Posterior vena cava (tissue), 2 donors: ENCODE measurements at regions of chr20 and their contacts with region 1.

Region 1: DNA sequence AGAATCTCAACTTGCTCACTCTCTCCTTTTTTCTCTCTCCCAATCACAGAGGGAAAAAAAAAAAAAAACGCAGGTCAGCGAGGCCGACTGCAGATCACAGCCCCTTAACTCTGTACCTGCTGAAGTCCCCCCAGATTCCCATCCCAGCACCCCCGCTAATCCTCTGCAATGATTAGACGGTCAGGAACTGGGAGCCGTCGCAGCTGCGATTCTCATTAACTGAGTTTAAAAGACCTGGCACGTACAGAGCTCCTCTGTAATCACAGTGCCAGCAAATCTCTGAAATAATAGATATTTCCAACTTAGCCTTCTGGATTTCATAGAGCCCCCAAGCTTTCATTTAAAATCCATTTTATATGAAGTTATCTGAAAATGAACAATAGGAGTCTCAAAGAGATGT is 84.4 kb downstream of the ANKRD60 start:
- DNase-seq: no peak

Region 2: DNA sequence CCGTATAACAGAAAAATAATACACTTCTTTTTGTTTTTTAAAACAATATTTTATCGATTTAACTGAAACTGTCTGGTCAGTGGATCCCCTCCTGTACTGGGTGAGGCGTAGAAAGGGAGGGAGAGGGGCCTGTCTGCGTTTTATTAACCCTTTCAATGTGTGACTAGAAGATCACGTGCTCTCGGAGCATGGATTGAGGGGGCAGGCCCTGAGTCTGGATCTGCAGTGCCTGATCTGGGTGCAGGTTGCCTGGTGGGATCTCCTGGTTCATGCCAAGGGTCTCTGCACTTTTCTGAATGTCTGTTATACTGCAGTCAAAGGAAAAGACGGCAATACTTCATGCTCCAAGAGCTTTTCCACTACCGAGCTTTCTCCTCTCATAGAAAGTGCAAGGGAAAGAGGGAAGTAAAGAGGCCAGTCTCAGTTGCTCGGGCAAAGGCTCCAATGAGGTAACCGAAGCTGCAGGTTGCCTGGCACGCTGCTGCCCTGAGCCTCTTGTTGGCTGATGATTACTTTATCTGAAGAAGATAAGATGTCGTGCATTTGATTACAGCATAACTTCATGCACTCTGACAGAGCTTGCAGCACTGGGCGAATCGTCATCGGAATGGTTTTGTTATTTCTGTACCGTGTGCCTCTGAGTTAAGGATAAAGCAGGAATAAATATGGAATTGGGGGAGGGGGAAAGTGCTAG is 266.8 kb before region 1 on chr20:
- intact Hi-C with region 1: no loop called
- DNase-seq: no peak

Region 3: GRCh38 chr20:58109918-58110635 is 34.0 kb before region 1 on chr20:
- intact Hi-C with region 1: loop called in 1 of 2 experiments (anchors 1 kb)
- DNase-seq: no peak